ENCODE measurements at regions of chr16 and their contacts with region 1.

Region 1: GRCh38 chr16:54633943-54634362 is 296.7 kb upstream of the IRX5 start:
- DNase-seq: peak; percentile 43
- H3K4me3 ChIP-seq: no peak overlapping the region
- H3K27ac ChIP-seq: peak overlapping the region; percentile 2
- H3K4me1 ChIP-seq: no peaks in the 10 kb centered on the region
- H3K27me3 ChIP-seq: no peaks in the 10 kb centered on the region
- CTCF ChIP-seq: peak; percentile 80 to 91

Region 2: DNA sequence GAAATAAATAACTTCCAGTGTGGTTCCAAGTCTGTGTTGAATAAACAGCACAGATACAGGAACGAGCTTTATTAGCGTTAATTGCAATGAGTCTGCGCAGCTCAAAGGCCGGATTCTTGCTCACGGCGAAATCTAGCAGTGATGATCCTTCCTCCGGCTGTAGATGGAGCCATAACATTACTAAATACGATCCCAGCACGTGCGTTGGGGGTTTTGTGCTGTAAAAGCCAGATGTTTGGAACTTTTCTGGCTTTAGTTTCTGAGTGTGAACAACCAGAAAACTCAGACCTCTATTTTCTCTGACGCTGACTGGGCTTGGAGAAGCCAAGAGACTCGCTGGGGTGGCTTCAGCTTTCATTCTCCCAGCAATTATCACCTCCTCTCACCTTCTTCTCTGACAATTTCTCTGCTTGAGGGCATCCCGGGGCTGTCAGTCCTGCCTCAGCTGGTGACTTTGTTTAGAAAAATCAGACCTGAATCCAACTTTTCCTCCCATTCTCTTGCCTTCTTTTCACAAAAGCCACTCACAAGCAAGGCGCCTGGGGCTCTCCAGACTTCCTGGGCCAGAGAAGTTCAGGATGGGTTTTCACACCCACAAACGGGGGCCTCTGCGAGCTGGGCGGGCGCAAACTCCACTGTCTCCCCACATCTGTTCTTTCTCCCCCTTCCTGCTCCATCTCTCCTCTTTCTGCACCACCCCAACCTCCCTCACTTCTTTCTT is 1083.8 kb before region 1 on chr16:
- CTCF ChIA-PET with region 1: no interaction called
- dilution Hi-C with region 1: no loop called
- in situ Hi-C with region 1: no loop called
- intact Hi-C with region 1: loop called (anchors 5 kb)
- DNase-seq: peak; percentile 60
- H3K4me3 ChIP-seq: no peak overlapping the region
- H3K27ac ChIP-seq: no peak overlapping the region
- H3K4me1 ChIP-seq: no peaks in the 10 kb centered on the region
- H3K27me3 ChIP-seq: no peaks in the 10 kb centered on the region
- CTCF ChIP-seq: peak; percentile 72 to 76

Region 3: GRCh38 chr16:53892155-53892554 is 741.8 kb before region 1 on chr16:
- CTCF ChIA-PET with region 1: no interaction called
- dilution Hi-C with region 1: no loop called
- in situ Hi-C with region 1: no loop called
- intact Hi-C with region 1: loop called (anchors 5 kb)
- DNase-seq: peak; percentile 51
- H3K4me3 ChIP-seq: no peak overlapping the region
- H3K27ac ChIP-seq: peak overlapping the region; percentile 5
- H3K4me1 ChIP-seq: peaks cover 26% of the 10 kb centered on the region
- H3K27me3 ChIP-seq: no peaks in the 10 kb centered on the region
- CTCF ChIP-seq: peak; percentile 53 to 69

Region 4: DNA sequence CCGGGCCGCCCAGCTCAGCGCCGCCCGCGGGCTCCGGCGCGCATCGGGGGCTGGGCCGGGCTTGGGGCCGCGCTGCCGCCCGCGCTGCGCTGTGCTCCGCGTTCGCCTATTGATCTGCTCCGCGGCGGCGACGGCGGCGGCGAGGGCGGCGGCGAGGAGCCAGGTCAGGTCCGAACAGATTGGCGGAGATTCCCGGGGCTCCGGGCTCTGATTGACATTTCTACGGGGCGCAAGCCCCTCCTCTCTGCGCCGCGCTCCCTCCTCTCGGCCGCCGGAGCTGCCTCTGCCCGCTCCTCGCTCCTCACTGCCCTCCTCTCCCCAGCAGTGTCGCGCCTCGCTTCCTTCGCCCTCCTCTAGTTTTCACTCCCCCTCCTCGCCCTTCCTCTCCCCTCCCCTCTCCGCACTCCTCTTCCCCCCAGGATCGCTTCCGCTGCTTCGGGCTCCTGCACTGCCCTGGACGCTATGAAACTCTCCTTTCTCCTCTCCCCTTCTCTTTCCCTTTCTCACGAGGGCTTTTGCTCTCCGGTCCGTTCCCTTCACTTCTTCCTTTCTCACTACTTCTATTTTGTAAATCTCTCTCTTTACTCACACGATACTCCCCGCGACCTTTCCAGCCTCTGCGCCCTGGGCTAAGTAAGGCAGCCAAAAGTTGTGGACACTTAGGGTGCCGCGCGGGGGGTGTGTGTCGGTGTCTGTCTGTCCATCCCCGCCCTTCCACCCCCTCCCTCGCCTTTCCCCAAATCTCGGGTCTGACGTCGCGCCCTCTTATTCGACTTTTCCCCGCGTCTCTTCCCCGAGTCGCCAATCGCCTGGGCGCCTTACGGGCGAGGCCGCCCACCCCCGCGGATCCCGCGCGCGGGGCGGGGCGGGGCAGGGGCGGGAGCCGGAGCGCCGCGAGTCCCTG is 347.6 kb before region 1 on chr16 and contains the start of gene IRX3:
- CTCF ChIA-PET with region 1: no interaction called
- dilution Hi-C with region 1: no loop called
- in situ Hi-C with region 1: loop called in 1 of 2 experiments (anchors 10 kb)
- intact Hi-C with region 1: loop called (anchors 2 kb)
- DNase-seq: peak; percentile 94
- H3K4me3 ChIP-seq: peak within 1 kb of the TSS; percentile 66 to 85 (median 80)
- H3K27ac ChIP-seq: peak within 1 kb of the TSS; percentile 74
- H3K4me1 ChIP-seq: peaks cover 30% of the 10 kb centered on the region
- H3K27me3 ChIP-seq: no peaks in the 10 kb centered on the region
- CTCF ChIP-seq: no peak
- total RNA-seq, gene IRX3: 7.2 to 15.5 TPM

Region 5: DNA sequence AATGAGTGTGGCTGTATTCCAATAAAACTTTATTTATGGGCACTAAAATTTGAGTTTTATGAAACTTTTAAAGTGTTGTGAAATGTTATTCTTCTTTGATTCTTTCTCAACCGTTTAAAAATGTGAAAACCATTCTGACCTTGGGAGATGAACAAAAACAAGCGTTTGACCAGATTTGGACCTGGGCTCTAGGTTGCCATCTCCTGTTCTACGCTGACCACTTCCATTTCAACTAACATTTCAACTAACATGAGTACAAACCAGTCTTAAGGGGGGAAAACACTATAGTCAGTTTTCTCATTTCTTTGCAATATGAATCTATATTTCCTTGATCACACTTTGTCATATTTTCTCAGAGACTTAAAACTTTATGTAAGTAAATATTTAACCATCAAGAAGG is 178.3 kb after region 1 on chr16:
- CTCF ChIA-PET with region 1: interaction called, 5 read pairs
- dilution Hi-C with region 1: no loop called
- in situ Hi-C with region 1: loop called in 1 of 2 experiments (anchors 10 kb)
- intact Hi-C with region 1: loop called (anchors 1 kb)
- DNase-seq: no peak
- H3K4me3 ChIP-seq: no peak overlapping the region
- H3K27ac ChIP-seq: no peak overlapping the region
- H3K4me1 ChIP-seq: no peaks in the 10 kb centered on the region
- H3K27me3 ChIP-seq: no peaks in the 10 kb centered on the region
- CTCF ChIP-seq: peak in 1 of 2 donors; percentile 53

Region 6: GRCh38 chr16:54829691-54830090 is 195.7 kb after region 1 on chr16:
- CTCF ChIA-PET with region 1: no interaction called
- dilution Hi-C with region 1: no loop called
- in situ Hi-C with region 1: no loop called
- intact Hi-C with region 1: no loop called
- DNase-seq: no peak
- H3K4me3 ChIP-seq: no peak overlapping the region
- H3K27ac ChIP-seq: no peak overlapping the region
- H3K4me1 ChIP-seq: no peaks in the 10 kb centered on the region
- H3K27me3 ChIP-seq: no peaks in the 10 kb centered on the region
- CTCF ChIP-seq: no peak

Region 7: GRCh38 chr16:54936979-54937670 is 303.2 kb after region 1 on chr16:
- CTCF ChIA-PET with region 1: no interaction called
- dilution Hi-C with region 1: no loop called
- in situ Hi-C with region 1: no loop called
- intact Hi-C with region 1: loop called (anchors 1 kb)
- DNase-seq: peak; percentile 82
- H3K4me3 ChIP-seq: peak overlapping the region; percentile 64 to 95 (median 72)
- H3K27ac ChIP-seq: peak overlapping the region; percentile 90
- H3K4me1 ChIP-seq: peaks cover 29% of the 10 kb centered on the region
- H3K27me3 ChIP-seq: no peaks in the 10 kb centered on the region
- CTCF ChIP-seq: peak; percentile 79 to 88

Region 8: DNA sequence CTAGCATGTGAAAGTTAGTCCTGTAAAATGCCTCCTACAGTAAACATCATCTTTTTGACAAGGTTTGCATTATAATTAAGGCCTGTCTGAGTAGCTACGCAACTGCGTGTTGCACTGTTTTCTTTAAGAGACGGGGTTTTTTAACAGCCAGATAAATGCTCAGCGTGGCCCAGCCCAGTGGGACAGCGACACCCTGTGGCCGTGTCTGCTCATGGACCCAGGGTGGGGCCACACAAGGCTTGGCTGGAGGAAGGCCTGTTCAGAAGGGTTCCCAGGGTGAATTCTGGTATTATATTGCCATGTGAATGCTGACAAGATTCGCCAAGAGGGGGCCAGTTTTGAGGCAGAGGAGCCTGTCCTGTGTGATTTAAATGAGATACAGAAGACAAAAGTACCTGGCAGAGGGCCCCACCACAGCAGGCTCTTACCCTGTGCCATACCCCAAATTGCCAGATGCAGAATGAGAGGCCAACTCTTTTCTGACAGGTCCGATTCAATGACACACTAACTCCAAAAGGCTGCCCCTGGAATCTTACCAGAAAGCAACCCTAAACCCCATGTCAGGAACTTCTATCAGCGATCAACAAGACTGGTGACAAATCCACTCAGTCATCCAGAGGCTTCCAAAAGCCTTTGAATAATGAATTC is 624.1 kb after region 1 on chr16:
- CTCF ChIA-PET with region 1: no interaction called
- dilution Hi-C with region 1: no loop called
- in situ Hi-C with region 1: no loop called
- intact Hi-C with region 1: loop called (anchors 1 kb)
- DNase-seq: peak; percentile 46
- H3K4me3 ChIP-seq: no peak overlapping the region
- H3K27ac ChIP-seq: no peak overlapping the region
- H3K4me1 ChIP-seq: no peaks in the 10 kb centered on the region
- H3K27me3 ChIP-seq: no peaks in the 10 kb centered on the region
- CTCF ChIP-seq: peak; percentile 91 to 95